B cell (primary cell): ENCODE measurements at regions of chr11 and their contacts with region 1.

Region 1: DNA sequence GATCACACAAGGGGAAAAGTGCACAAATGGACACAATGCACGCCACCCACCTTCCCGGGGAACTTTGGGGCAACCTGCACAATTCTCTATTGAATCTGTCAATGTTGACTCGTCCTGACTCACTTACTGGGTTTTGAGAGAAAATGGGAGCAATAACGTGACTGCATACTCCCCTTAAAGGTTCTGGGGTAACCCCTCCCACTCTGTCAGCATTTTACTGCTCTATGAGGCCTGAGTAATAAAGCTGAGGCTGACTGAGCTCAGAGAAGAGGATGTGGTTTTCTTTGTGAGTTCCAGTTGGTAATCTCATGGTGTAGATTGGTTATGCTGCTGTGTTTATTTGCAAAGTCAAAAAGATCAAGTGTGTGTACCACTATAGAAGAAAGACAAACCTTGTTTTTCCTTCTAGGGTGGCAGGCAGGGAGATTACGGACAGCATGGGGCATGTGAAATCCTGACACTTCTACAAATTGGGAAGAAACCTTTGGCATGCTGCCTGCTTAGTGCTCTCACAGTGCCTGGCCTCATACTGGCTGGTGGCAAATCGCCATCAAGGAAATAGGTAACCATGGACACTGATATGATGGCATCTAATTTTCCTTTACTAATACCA is 16.1 kb upstream of the APOA1 start:
- DNase-seq: peak; percentile 70
- ATAC-seq: peak; percentile 98
- H3K4me3 ChIP-seq: peak overlapping the region in 1 of 5 experiments; percentile 39
- H3K4me3 Mint-ChIP-seq: peak overlapping the region; percentile 47
- H3K27ac ChIP-seq: no peak overlapping the region
- H3K27ac Mint-ChIP-seq: peak overlapping the region; percentile 3
- H3K4me1 ChIP-seq: peaks cover 35 to 43% of the 10 kb centered on the region in 2 donors
- H3K4me1 Mint-ChIP-seq: peaks cover 56% of the 10 kb centered on the region
- H3K27me3 ChIP-seq: no peaks in the 10 kb centered on the region
- H3K27me3 Mint-ChIP-seq: no peaks in the 10 kb centered on the region
- CTCF ChIP-seq: no peak

Region 2: GRCh38 chr11:116772443-116773202 is 80.9 kb before region 1 on chr11 and contains the start of gene BUD13:
- CTCF ChIA-PET with region 1: no interaction called
- POLR2A ChIA-PET with region 1: interaction called, 3 read pairs
- intact Hi-C with region 1: loop called (anchors 5 kb)
- DNase-seq: peak; percentile 96
- ATAC-seq: peak; percentile 89
- H3K4me3 ChIP-seq: peak within 1 kb of the TSS; percentile 71 to 99 (median 95)
- H3K4me3 Mint-ChIP-seq: peak within 1 kb of the TSS; percentile 93
- H3K27ac ChIP-seq: peak within 1 kb of the TSS; percentile 85 to 96
- H3K27ac Mint-ChIP-seq: peak within 1 kb of the TSS; percentile 93
- H3K4me1 ChIP-seq: peaks cover 23 to 28% of the 10 kb centered on the region in 2 donors
- H3K4me1 Mint-ChIP-seq: peaks cover 34% of the 10 kb centered on the region
- H3K27me3 ChIP-seq: no peaks in the 10 kb centered on the region
- H3K27me3 Mint-ChIP-seq: no peaks in the 10 kb centered on the region
- CTCF ChIP-seq: no peak
- total RNA-seq, gene BUD13: 24.2 and 24.8 TPM in 2 replicates

Region 3: GRCh38 chr11:116835791-116836631 is 17.6 kb before region 1 on chr11:
- CTCF ChIA-PET with region 1: interaction called, 14 read pairs
- POLR2A ChIA-PET with region 1: no interaction called
- intact Hi-C with region 1: no loop called
- DNase-seq: peak; percentile 84
- ATAC-seq: peak; percentile 91
- H3K4me3 ChIP-seq: peak overlapping the region in 4 of 5 experiments; percentile 38 to 61 (median 46)
- H3K4me3 Mint-ChIP-seq: peak overlapping the region; percentile 83
- H3K27ac ChIP-seq: no peak overlapping the region
- H3K27ac Mint-ChIP-seq: no peak overlapping the region
- H3K4me1 ChIP-seq: peaks cover 7 to 14% of the 10 kb centered on the region in 2 donors
- H3K4me1 Mint-ChIP-seq: peaks cover 16% of the 10 kb centered on the region
- H3K27me3 ChIP-seq: peaks cover 0 to 4% (median 0%) of the 10 kb centered on the region in 4 experiments
- H3K27me3 Mint-ChIP-seq: peaks cover 4% of the 10 kb centered on the region
- CTCF ChIP-seq: peak; percentile 44

Region 4: DNA sequence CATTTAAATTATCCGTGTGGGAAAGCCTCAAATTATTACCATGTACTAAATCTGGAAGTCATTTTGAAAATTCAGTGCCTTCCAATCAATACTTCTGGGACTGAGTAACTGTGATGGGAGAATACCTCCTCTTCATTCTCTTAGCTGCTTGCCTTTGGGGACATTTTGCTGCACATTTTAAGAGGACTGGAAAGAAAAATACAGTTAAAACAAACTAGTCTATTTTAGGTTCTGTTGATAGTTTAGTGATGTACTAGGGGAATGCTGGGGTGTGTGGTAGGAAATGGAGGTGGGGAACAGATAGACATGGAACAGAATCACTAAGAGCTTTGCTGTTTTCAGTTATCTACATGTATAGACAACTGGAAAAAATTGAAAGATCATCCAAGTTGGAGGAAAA is 49.5 kb after region 1 on chr11:
- CTCF ChIA-PET with region 1: no interaction called
- POLR2A ChIA-PET with region 1: no interaction called
- intact Hi-C with region 1: no loop called
- DNase-seq: no peak
- ATAC-seq: no peak
- H3K4me3 ChIP-seq: no peak overlapping the region
- H3K4me3 Mint-ChIP-seq: no peak overlapping the region
- H3K27ac ChIP-seq: no peak overlapping the region
- H3K27ac Mint-ChIP-seq: no peak overlapping the region
- H3K4me1 ChIP-seq: no peaks in the 10 kb centered on the region
- H3K4me1 Mint-ChIP-seq: peaks cover 18% of the 10 kb centered on the region
- H3K27me3 ChIP-seq: no peaks in the 10 kb centered on the region
- H3K27me3 Mint-ChIP-seq: no peaks in the 10 kb centered on the region
- CTCF ChIP-seq: no peak